Endothelial cell of umbilical vein (primary cell): ENCODE measurements at regions of chr2 and their contacts with region 1.

Region 1: GRCh38 chr2:237858294-237859081 is 935 bp upstream of the RAMP1 start:
- DNase-seq: peak; percentile 60
- H3K4me3 ChIP-seq: no peak overlapping the region
- H3K27ac ChIP-seq: no peak overlapping the region
- H3K4me1 ChIP-seq: no peaks in the 10 kb centered on the region
- H3K27me3 ChIP-seq: peaks cover 37 to 45% of the 10 kb centered on the region in 2 experiments
- CTCF ChIP-seq: peak; percentile 55 to 81
- POLR2A ChIP-seq: no peak

Region 2: DNA sequence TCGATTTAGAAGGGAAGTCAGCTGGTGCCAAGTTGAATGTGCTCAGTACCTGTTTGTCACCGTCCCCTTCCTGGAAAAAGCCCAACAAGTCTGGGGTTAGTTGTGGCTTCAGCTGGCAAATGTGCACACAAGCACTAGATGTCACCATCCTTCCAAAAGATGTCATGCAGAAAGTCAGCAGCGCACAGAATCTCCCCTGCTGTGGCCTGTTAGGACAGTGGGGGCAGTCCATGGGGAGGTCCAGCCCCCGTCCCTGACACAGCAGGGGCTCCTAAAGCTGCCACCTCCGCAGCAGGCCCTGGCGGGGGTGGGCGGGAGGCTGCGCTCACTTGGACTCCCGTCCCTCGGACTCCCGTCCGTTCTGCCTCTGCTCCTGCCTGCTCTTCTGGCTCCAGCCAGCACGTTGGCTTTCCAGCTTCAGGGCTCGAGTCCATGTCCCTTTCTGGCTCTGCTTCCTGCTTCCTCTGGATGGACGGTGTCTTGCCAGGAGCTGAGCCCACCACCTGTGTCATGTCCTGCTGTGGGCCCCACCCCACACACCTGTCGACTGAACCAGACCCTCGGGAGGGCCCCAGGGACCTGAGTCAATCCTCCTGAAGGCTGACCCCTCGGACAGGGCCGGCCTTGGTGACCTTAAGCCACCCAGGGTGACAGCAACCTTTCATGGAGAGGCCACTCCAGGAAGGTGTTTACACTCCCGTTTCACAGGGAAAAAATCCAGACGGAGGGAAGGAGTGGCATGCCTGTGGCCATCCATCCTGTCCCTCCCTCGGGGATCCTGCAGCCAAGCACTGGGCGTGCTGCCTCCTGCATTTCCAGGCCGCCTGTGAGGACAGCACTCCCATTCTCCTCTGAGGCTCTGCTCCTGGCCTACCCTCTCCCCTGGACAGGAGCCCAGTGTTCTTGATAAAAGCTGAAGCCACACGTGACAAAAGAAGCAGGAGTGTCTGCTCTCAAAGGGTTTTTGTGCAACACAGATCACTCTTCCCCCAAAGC is 276.4 kb before region 1 on chr2:
- CTCF ChIA-PET with region 1: interaction called, 3 read pairs
- POLR2A ChIA-PET with region 1: no interaction called
- dilution Hi-C with region 1: no loop called
- intact Hi-C with region 1: loop called (anchors 1 kb)
- DNase-seq: peak; percentile 79
- H3K4me3 ChIP-seq: no peak overlapping the region
- H3K27ac ChIP-seq: no peak overlapping the region
- H3K4me1 ChIP-seq: no peaks in the 10 kb centered on the region
- H3K27me3 ChIP-seq: peaks cover 2% of the 10 kb centered on the region in 2 experiments
- CTCF ChIP-seq: peak; percentile 55 to 61
- POLR2A ChIP-seq: no peak

Region 3: GRCh38 chr2:237966565-237967462 is 108.3 kb after region 1 on chr2 and contains the start of gene UBE2F:
- CTCF ChIA-PET with region 1: no interaction called
- POLR2A ChIA-PET with region 1: no interaction called
- dilution Hi-C with region 1: no loop called
- intact Hi-C with region 1: loop called (anchors 2 kb)
- DNase-seq: peak; percentile 96
- H3K4me3 ChIP-seq: peak within 1 kb of the TSS; percentile 40 to 65 (median 63)
- H3K27ac ChIP-seq: no peak within 1 kb of the TSS
- H3K4me1 ChIP-seq: peaks cover 10% of the 10 kb centered on the region
- H3K27me3 ChIP-seq: no peaks in the 10 kb centered on the region
- CTCF ChIP-seq: no peak
- POLR2A ChIP-seq: peak; percentile 73
- total RNA-seq, gene UBE2F: 42.3 and 47.4 TPM in 2 replicates

Region 4: GRCh38 chr2:238015705-238016104 is 157.2 kb after region 1 on chr2:
- CTCF ChIA-PET with region 1: interaction called, 8 read pairs
- POLR2A ChIA-PET with region 1: no interaction called
- dilution Hi-C with region 1: no loop called
- intact Hi-C with region 1: loop called (anchors 1 kb)
- DNase-seq: no peak
- H3K4me3 ChIP-seq: no peak overlapping the region
- H3K27ac ChIP-seq: no peak overlapping the region
- H3K4me1 ChIP-seq: no peaks in the 10 kb centered on the region
- H3K27me3 ChIP-seq: no peaks in the 10 kb centered on the region
- CTCF ChIP-seq: peak; percentile 20 to 21
- POLR2A ChIP-seq: no peak

Region 5: GRCh38 chr2:238060542-238061314 is 202.2 kb after region 1 on chr2 and contains the start of gene SCLY:
- CTCF ChIA-PET with region 1: interaction called, 7 read pairs
- POLR2A ChIA-PET with region 1: no interaction called
- dilution Hi-C with region 1: no loop called
- intact Hi-C with region 1: loop called (anchors 5 kb)
- DNase-seq: peak; percentile 98
- H3K4me3 ChIP-seq: peak within 1 kb of the TSS; percentile 72 to 87 (median 77)
- H3K27ac ChIP-seq: peak within 1 kb of the TSS; percentile 54
- H3K4me1 ChIP-seq: peaks cover 10% of the 10 kb centered on the region
- H3K27me3 ChIP-seq: no peaks in the 10 kb centered on the region
- CTCF ChIP-seq: no peak
- POLR2A ChIP-seq: peak; percentile 68
- total RNA-seq, gene SCLY: 28.6 and 32.7 TPM in 2 replicates

Region 6: GRCh38 chr2:238106686-238107524 is 248.4 kb after region 1 on chr2:
- CTCF ChIA-PET with region 1: interaction called, 5 read pairs
- POLR2A ChIA-PET with region 1: no interaction called
- dilution Hi-C with region 1: no loop called
- intact Hi-C with region 1: loop called (anchors 1 kb)
- DNase-seq: no peak
- H3K4me3 ChIP-seq: no peak overlapping the region
- H3K27ac ChIP-seq: no peak overlapping the region
- H3K4me1 ChIP-seq: no peaks in the 10 kb centered on the region
- H3K27me3 ChIP-seq: no peaks in the 10 kb centered on the region
- CTCF ChIP-seq: peak in 1 of 2 donors; percentile 24
- POLR2A ChIP-seq: no peak

Region 7: DNA sequence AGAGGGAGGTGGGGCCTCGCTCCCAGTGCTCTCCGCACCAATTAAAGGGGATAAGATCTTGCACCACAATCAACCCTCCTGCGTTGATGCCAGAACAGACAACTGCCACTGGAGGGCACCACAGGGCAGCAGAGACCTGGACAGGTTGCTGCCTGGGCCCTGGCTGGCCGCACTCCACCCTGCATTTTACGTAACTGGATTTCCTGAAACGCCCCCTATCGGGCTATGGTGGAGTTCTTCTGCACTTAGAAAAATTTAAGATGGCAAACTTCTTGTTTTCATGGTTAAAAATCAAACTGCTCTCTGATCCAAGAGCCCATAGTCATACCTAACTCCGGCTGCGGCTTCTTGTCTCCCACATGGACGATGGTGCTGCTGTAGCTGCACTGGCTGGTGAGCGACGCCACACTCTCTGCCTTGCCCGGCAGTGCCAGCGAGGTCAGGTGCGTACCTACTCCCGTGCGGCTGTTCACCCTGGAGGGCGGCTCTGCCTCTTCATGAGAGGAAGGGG is 398.2 kb after region 1 on chr2:
- CTCF ChIA-PET with region 1: interaction called, 7 read pairs
- POLR2A ChIA-PET with region 1: no interaction called
- dilution Hi-C with region 1: no loop called
- intact Hi-C with region 1: loop called (anchors 1 kb)
- DNase-seq: peak; percentile 80
- H3K4me3 ChIP-seq: no peak overlapping the region
- H3K27ac ChIP-seq: no peak overlapping the region
- H3K4me1 ChIP-seq: no peaks in the 10 kb centered on the region
- H3K27me3 ChIP-seq: no peaks in the 10 kb centered on the region
- CTCF ChIP-seq: peak; percentile 91 to 93
- POLR2A ChIP-seq: no peak